B cell (primary cell): ENCODE measurements at regions of chr12 and their contacts with region 1.

Region 1: DNA sequence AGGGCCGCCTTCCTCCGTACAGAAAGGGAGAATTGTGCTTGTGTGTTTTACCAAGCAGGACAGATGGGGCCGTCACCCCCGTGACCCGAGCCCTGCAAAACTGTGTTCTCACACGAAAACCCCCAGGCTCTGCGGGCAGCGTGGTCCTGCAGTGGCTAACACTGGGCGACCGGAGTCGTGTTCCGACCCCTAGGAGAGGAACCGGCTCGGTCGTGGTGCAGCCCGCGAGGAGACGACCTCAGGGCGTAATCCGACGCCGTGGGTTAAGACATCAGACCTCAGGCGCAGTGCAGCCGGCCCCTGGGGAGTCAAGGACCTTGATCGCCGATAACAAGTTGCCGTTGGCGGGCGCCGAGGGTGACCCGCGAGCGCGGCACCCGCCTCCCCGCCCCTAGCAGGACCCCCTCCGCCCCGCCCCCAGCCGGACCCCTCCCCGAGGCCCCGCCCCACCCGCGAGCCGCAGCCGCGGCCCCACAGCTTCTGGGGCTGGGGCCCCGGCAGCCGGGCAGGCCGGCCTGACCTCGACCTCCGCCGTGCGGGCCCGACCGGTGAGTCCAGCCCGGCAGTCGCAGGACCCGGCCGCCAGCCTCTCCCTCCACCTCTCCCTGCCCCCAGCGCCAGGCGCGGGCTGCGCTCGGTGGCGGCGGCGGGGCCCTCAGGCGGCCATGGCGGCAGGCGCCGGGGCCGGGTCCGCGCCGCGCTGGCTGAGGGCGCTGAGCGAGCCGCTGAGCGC is at the start of gene CHPT1:
- DNase-seq: peak; percentile 87
- ATAC-seq: peak; percentile 79
- H3K4me3 ChIP-seq: peak within 1 kb of the TSS; percentile 75 to 90 (median 83)
- H3K4me3 Mint-ChIP-seq: peak within 1 kb of the TSS; percentile 99
- H3K27ac ChIP-seq: peak within 1 kb of the TSS; percentile 83 to 88
- H3K27ac Mint-ChIP-seq: peak within 1 kb of the TSS; percentile 98
- H3K4me1 ChIP-seq: peaks cover 26 to 31% of the 10 kb centered on the region in 2 donors
- H3K4me1 Mint-ChIP-seq: peaks cover 61% of the 10 kb centered on the region
- H3K27me3 ChIP-seq: no peaks in the 10 kb centered on the region
- H3K27me3 Mint-ChIP-seq: no peaks in the 10 kb centered on the region
- CTCF ChIP-seq: no peak
- total RNA-seq, gene CHPT1: 215 and 224 TPM in 2 replicates

Region 2: DNA sequence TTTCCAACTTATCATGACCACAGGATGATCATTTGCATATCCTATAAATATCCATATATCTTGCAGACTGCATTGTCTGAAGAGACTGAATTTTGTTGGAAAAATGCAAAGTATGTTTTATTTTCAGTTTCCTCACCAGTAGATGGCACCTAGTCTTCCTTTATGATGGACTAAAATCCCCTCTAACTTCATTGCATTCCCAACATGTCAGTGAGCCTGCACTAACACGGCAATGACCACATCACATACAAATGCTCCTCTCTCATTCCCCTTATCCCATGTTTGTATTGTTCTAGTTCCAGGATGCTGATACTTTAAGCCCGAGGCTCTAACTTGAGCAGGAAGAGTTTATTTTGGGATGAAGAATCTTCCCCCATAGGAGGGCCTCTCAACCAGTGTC is 127.3 kb before region 1 on chr12:
- CTCF ChIA-PET with region 1: interaction called, 7 read pairs
- POLR2A ChIA-PET with region 1: no interaction called
- intact Hi-C with region 1: loop called (anchors 5 kb)
- DNase-seq: peak; percentile 53
- ATAC-seq: peak; percentile 33
- H3K4me3 ChIP-seq: peak overlapping the region in 1 of 5 experiments; percentile 22
- H3K4me3 Mint-ChIP-seq: peak overlapping the region; percentile 20
- H3K27ac ChIP-seq: no peak overlapping the region
- H3K27ac Mint-ChIP-seq: no peak overlapping the region
- H3K4me1 ChIP-seq: peaks cover 4 to 7% of the 10 kb centered on the region in 2 donors
- H3K4me1 Mint-ChIP-seq: peaks cover 4% of the 10 kb centered on the region
- H3K27me3 ChIP-seq: peaks cover 0 to 3% (median 0%) of the 10 kb centered on the region in 4 experiments
- H3K27me3 Mint-ChIP-seq: peaks cover 3% of the 10 kb centered on the region
- CTCF ChIP-seq: peak; percentile 59

Region 3: GRCh38 chr12:101655393-101655792 is 42.0 kb before region 1 on chr12:
- CTCF ChIA-PET with region 1: no interaction called
- POLR2A ChIA-PET with region 1: interaction called, 3 read pairs
- intact Hi-C with region 1: loop called (anchors 5 kb)
- DNase-seq: no peak
- ATAC-seq: no peak
- H3K4me3 ChIP-seq: no peak overlapping the region
- H3K4me3 Mint-ChIP-seq: no peak overlapping the region
- H3K27ac ChIP-seq: no peak overlapping the region
- H3K27ac Mint-ChIP-seq: no peak overlapping the region
- H3K4me1 ChIP-seq: peaks cover 12 to 18% of the 10 kb centered on the region in 2 donors
- H3K4me1 Mint-ChIP-seq: peaks cover 22% of the 10 kb centered on the region
- H3K27me3 ChIP-seq: no peaks in the 10 kb centered on the region
- H3K27me3 Mint-ChIP-seq: peaks cover 3% of the 10 kb centered on the region
- CTCF ChIP-seq: no peak

Region 4: DNA sequence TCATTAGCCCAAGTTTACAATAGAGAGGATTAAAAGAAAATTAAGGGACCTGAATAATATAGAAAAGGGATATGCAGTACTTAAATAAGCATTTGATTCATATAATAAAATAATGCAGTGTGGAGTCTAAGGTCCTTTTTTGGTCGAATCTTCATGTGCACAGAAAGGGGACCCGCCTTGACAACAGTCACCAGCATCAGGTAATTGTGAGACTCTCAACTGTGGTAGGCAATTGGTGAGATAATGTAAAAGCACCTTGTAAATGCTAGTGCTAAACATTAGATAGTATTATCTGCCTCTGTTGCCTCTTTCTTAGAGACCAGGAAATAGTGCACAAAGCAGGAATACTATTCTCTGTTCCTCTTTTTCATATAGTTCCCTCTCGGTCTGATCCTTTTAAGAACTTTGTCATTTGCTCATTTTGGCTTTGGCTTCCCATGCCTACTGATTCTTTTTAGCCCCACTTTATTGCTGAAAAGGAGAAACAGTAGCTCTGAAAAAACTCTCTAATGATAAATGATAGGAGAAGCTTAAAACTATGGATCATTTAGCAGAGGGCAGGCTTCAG is 17.6 kb after region 1 on chr12:
- CTCF ChIA-PET with region 1: interaction called, 4 read pairs
- POLR2A ChIA-PET with region 1: interaction called, 7 read pairs
- intact Hi-C with region 1: loop called (anchors 2 kb)
- DNase-seq: no peak
- ATAC-seq: no peak
- H3K4me3 ChIP-seq: no peak overlapping the region
- H3K4me3 Mint-ChIP-seq: no peak overlapping the region
- H3K27ac ChIP-seq: no peak overlapping the region
- H3K27ac Mint-ChIP-seq: no peak overlapping the region
- H3K4me1 ChIP-seq: peaks cover 0 to 12% of the 10 kb centered on the region in 2 donors
- H3K4me1 Mint-ChIP-seq: peaks cover 42% of the 10 kb centered on the region
- H3K27me3 ChIP-seq: no peaks in the 10 kb centered on the region
- H3K27me3 Mint-ChIP-seq: no peaks in the 10 kb centered on the region
- CTCF ChIP-seq: no peak

Region 5: DNA sequence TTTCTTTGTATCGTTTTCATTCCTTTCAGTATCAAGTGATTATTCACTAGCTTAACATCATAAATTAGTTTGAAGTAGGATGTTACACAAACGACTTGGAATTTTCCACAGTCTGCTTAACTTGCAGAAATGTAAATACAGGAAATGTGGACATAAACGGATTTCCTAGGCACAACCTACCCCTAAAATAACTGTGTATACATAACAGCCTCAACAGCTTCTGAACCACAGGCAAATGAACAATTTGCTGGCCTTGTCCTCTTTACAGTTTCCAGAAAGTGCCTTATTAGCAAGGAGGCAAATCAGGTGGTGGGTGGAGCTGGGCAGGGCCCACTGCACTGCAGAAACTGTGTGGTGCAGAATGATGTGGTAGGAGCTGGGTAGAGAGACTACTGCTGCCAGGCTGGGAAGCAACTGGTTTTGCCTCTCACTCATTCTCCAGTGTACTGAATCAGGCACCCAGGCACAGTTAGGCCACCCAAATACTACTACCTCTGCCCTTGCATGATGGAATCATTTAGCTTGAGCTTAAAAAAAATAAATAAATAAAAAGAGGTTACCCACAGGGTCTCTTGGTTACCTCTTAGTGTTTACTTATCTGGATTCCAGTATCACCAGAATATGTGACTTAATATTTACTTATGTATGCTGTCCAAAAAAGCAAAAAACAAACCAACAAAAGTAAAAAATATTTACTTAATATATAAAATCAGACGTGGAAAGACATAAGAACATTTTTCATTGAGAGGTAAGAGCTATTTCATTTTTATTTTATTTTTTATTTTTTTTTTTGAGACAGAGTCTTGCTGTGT is 194.3 kb after region 1 on chr12:
- CTCF ChIA-PET with region 1: no interaction called
- POLR2A ChIA-PET with region 1: no interaction called
- intact Hi-C with region 1: no loop called
- DNase-seq: peak; percentile 34
- ATAC-seq: no peak
- H3K4me3 ChIP-seq: no peak overlapping the region
- H3K4me3 Mint-ChIP-seq: no peak overlapping the region
- H3K27ac ChIP-seq: no peak overlapping the region
- H3K27ac Mint-ChIP-seq: peak overlapping the region; percentile 10
- H3K4me1 ChIP-seq: peaks cover 8 to 9% of the 10 kb centered on the region in 2 donors
- H3K4me1 Mint-ChIP-seq: peaks cover 14% of the 10 kb centered on the region
- H3K27me3 ChIP-seq: no peaks in the 10 kb centered on the region
- H3K27me3 Mint-ChIP-seq: no peaks in the 10 kb centered on the region
- CTCF ChIP-seq: no peak

Region 6: DNA sequence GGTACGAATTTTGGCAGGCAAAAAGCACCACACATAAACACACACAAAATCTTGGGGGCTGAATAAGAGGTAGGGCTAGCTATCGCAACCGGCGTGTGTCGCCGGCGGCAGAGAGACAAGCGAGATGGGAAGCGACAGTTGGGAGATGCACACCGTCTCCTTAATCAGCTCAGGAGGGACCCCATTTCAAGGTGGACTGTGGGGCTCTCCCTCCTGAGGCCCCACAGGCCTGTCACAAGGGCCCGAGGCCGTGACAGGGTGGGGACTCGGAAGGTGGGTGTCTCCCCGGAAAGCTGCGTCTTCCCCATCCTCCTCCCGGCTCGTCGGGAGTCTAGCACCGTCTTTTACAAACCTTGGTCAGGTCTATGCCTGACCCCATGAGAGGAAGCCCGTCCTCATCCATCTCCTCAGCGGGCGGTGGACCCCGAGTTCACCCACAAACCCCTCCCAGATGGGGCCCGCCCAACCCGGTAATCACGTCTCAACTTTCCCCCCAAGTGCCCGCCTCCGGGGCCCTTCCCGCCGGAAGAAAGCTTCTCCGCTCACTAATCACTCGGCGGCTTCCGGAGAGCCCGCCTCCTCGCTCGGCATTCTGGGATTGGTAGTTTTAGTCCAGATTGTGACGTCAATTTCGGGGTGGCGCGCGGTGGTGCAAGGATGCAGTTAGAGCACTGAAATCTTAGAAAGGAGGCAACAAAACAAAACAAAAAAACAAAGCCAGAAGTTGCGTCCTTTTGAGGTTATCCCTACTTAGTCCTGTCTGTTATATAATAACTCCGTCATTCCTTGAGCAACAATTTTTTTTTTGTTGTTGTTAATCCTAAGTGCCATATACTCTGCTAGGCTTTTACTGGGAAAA is 364.4 kb after region 1 on chr12 and contains the start of gene WASHC3:
- CTCF ChIA-PET with region 1: no interaction called
- POLR2A ChIA-PET with region 1: no interaction called
- intact Hi-C with region 1: loop called (anchors 5 kb)
- DNase-seq: peak; percentile 95
- ATAC-seq: peak; percentile 96
- H3K4me3 ChIP-seq: peak within 1 kb of the TSS; percentile 72 to 92 (median 89)
- H3K4me3 Mint-ChIP-seq: peak within 1 kb of the TSS; percentile 95
- H3K27ac ChIP-seq: peak within 1 kb of the TSS; percentile 93 to 96
- H3K27ac Mint-ChIP-seq: peak within 1 kb of the TSS; percentile 96
- H3K4me1 ChIP-seq: peaks cover 5 to 12% of the 10 kb centered on the region in 2 donors
- H3K4me1 Mint-ChIP-seq: peaks cover 27% of the 10 kb centered on the region
- H3K27me3 ChIP-seq: peaks cover 0 to 4% (median 0%) of the 10 kb centered on the region in 4 experiments
- H3K27me3 Mint-ChIP-seq: no peaks in the 10 kb centered on the region
- CTCF ChIP-seq: no peak
- total RNA-seq, gene WASHC3: 52.8 and 55.8 TPM in 2 replicates